Activated naive CD4-positive, alpha-beta T cell treated with anti-CD3 and anti-CD28 coated beads, Interleukin-2, amount 10 ng/mL, durations not matched to agents 7 days and 5 days (primary cell): ENCODE measurements at regions of chr4 and their contacts with region 1.

Region 1: DNA sequence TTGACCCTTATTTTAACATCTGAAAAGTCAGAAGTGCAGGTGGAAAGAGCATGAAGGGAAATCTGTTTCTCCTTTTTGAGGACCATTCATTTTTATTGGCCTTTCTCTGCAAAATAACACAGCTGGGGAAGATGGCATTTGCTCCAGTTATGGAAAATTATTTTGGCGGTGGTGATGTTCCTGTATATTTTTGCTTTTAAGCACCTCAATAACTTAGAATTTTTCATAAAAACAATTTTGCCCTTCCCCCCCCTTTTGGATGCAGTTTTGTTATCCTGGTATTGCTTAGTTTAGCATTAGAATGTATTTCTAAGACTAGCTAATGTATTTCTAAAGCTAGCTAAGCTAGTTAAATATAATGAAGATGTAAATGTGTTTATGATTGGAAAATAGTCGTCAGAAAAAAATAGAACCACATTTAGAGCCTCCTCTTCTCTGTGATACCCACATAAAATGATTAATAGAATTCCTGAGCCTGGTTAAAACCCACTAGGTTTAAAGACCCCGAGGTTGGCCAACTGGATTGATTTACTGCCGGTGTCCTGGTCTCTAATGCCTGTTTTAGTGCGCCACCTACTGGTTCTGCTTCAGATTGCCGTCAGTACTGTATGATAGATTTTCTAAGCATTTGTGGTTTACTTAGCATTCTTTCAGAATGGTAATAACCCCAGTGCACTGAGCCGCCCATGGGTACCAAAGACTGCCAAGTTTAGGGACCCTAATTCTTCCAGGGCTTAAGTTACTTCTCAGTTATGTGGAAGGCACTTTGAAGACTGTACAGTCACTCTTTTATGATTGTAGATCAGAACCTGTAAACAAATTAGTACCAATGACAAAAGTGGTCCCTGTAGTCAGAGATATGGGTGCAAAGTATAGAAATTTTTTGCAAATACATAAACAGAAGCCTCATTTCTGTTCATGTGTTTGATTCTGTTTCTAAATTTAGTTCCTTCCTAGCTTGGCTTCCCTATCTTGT is 11.4 kb downstream of the KLF3 start:
- DNase-seq: peak; percentile 91
- H3K4me3 Mint-ChIP-seq: peak overlapping the region; percentile 50
- H3K27ac Mint-ChIP-seq: peak overlapping the region; percentile 53
- H3K4me1 Mint-ChIP-seq: peaks cover 83% of the 10 kb centered on the region
- H3K27me3 Mint-ChIP-seq: no peaks in the 10 kb centered on the region

Region 2: GRCh38 chr4:38062088-38062893 is 613.1 kb before region 1 on chr4:
- CTCF ChIA-PET with region 1: interaction called, 18 read pairs
- DNase-seq: peak; percentile 80
- H3K4me3 Mint-ChIP-seq: peak overlapping the region; percentile 72
- H3K27ac Mint-ChIP-seq: peak overlapping the region; percentile 51
- H3K4me1 Mint-ChIP-seq: peaks cover 19% of the 10 kb centered on the region
- H3K27me3 Mint-ChIP-seq: no peaks in the 10 kb centered on the region

Region 3: GRCh38 chr4:38069271-38069760 is 606.1 kb before region 1 on chr4:
- CTCF ChIA-PET with region 1: interaction called, 24 read pairs
- DNase-seq: peak; percentile 69
- H3K4me3 Mint-ChIP-seq: no peak overlapping the region
- H3K27ac Mint-ChIP-seq: no peak overlapping the region
- H3K4me1 Mint-ChIP-seq: peaks cover 47% of the 10 kb centered on the region
- H3K27me3 Mint-ChIP-seq: no peaks in the 10 kb centered on the region

Region 4: GRCh38 chr4:38319456-38320342 is 355.7 kb before region 1 on chr4:
- CTCF ChIA-PET with region 1: interaction called, 79 read pairs
- DNase-seq: peak; percentile 95
- H3K4me3 Mint-ChIP-seq: peak overlapping the region; percentile 74
- H3K27ac Mint-ChIP-seq: peak overlapping the region; percentile 97
- H3K4me1 Mint-ChIP-seq: peaks cover 74% of the 10 kb centered on the region
- H3K27me3 Mint-ChIP-seq: peaks cover 4% of the 10 kb centered on the region

Region 5: GRCh38 chr4:38687571-38688011 is 12.2 kb after region 1 on chr4:
- CTCF ChIA-PET with region 1: interaction called, 12 read pairs
- DNase-seq: no peak
- H3K4me3 Mint-ChIP-seq: no peak overlapping the region
- H3K27ac Mint-ChIP-seq: peak overlapping the region; percentile 1
- H3K4me1 Mint-ChIP-seq: peaks cover 61% of the 10 kb centered on the region
- H3K27me3 Mint-ChIP-seq: no peaks in the 10 kb centered on the region

Region 6: GRCh38 chr4:38717604-38718003 is 42.2 kb after region 1 on chr4:
- CTCF ChIA-PET with region 1: no interaction called
- DNase-seq: no peak
- H3K4me3 Mint-ChIP-seq: no peak overlapping the region
- H3K27ac Mint-ChIP-seq: no peak overlapping the region
- H3K4me1 Mint-ChIP-seq: no peaks in the 10 kb centered on the region
- H3K27me3 Mint-ChIP-seq: peaks cover 5% of the 10 kb centered on the region

Region 7: DNA sequence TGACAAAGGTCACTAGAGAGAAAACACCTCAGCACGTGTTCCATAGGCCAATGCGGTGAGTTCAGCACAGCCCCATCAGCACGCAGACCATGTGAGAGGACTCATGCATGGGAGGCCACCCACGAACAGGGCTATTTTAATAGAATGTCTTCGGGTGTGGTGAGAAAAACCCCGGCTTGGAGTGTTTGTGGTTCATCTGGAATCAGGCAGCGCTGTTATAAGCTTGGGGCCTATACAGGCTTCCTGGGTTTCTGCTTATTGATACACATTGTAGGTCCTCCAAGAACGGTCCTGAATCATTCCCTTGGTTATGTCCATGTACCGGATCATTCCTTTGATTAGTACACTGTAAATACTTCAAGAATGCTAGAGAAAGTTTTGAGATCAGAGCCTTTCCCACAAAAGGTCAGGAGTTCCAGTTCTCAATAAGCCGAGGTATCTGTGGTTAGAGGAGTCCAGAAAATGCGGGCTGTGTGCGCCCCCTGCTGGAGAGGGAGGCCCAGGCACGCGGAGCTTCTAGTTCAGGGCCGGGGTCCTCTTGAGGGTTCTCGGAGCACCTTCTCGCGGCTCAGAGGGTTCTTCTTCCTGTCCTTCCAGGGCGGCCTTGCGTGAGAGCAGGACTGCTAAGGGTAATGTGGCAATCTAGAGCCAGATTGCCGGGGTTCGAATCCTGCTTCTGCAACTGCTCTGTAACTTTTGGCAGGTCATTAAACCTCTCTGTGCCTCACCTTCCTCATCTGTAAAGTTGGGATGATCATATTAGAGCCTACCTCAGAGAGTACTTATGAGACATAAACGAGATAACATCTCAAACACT is 55.6 kb after region 1 on chr4:
- CTCF ChIA-PET with region 1: interaction called, 16 read pairs
- DNase-seq: peak; percentile 87
- H3K4me3 Mint-ChIP-seq: no peak overlapping the region
- H3K27ac Mint-ChIP-seq: no peak overlapping the region
- H3K4me1 Mint-ChIP-seq: peaks cover 33% of the 10 kb centered on the region
- H3K27me3 Mint-ChIP-seq: peaks cover 7% of the 10 kb centered on the region